ENCODE measurements at regions of chr10 and their contacts with region 1.

Region 1: DNA sequence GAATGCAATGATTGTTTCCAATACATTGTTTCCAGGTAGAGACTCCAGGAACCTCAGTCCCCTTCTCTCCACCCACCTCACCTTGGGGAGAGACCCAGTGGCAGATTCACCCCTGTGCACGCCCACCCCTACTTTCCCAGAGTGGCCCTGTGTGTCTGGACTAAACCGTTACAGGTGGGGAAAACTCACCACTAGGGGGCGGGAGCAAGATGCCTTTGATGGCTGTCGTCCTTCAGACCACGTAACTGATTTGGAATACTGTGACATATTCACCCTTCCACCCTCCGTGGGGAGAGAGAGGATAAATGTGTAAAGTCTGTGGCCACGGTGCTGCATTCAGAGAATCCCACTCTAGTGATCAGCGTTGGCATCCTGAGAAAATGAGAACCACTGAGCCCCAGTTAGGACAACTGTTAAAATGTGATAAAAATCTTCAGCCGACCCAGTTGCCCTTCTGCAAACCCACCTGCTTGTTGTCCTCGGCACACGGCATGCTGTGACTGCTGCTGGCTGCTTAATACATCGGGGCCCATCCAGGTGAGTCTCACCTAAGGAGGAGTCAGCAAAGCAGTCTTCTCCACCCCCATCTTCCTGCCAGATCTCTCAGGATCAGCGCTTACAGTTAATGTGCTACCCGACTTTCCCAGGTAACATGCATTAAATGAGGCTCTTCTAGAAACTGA is 41.5 kb upstream of the NMT2 start:
- DNase-seq: peak; percentile 49 to 54
- ATAC-seq: peak; percentile 73 to 77
- H3K4me3 ChIP-seq: no peak overlapping the region
- H3K27ac ChIP-seq: no peak overlapping the region
- H3K4me1 ChIP-seq: peaks cover 0 to 4% of the 10 kb centered on the region in 2 donors
- H3K27me3 ChIP-seq: no peaks in the 10 kb centered on the region
- CTCF ChIP-seq: peak; percentile 38 to 82 (median 64)
- POLR2A ChIP-seq: no peak

Region 2: DNA sequence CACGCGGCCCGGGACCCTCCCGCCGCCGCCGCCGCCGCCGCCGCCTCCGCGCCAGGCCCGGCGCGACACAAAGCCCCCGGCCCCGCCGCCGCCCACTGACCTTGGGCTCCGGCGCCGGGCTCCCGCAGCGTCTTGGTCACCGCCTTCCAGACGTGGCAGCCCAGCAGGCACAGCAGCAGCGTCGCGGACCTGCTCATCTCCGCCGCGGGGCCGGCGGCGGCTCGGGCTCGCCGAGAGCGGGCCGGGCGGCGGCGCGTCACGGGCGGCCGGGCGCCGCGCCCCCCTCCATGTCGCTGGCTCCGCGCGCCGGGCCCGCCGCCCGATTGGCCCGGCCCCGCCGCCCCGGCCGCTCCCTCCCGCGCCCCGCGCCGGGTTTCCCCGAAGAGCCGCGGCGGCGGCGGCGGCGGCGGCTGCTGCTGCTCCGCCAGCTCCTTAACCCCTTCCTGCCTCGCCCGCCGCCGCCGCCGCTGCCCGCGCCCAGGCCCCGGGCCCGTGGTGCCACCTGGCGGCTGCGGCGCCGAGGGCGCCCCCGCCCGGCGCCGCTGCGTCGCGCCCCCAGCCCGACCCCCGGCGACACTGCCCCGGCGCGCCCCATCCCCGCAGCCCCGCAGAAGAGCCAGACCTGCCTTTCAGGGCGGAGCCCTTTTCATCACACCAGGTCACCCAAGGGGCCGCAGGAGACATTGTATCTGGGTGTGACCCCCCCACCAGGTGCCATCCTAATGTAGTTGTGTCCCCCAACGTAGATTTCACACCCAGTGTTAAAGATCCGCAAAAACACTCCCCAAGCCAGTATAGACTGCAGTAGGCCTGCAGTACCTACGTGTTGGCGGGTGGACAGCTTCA is 161.1 kb after region 1 on chr10 and contains the start of gene FAM171A1:
- in situ Hi-C with region 1: loop called in 2 of 4 experiments (anchors 10 kb)
- intact Hi-C with region 1: loop called (anchors 1 kb)
- DNase-seq: no peak
- ATAC-seq: peak; percentile 72 to 75
- H3K4me3 ChIP-seq: peak within 1 kb of the TSS; percentile 61 to 63 (median 62)
- H3K27ac ChIP-seq: peak within 1 kb of the TSS in 1 of 4 donors; percentile 30
- H3K4me1 ChIP-seq: peaks cover 0 to 12% of the 10 kb centered on the region in 2 donors
- H3K27me3 ChIP-seq: no peaks in the 10 kb centered on the region
- CTCF ChIP-seq: peak in 2 of 5 experiments; percentile 14 to 41
- POLR2A ChIP-seq: no peak
- total RNA-seq, gene FAM171A1: 2.1 to 5.6 (median 4.3) TPM

Measured in gastrocnemius medialis (tissue), 4 donors.